Endothelial cell of umbilical vein (primary cell): ENCODE measurements at regions of chr18 and their contacts with region 1.

Region 1: DNA sequence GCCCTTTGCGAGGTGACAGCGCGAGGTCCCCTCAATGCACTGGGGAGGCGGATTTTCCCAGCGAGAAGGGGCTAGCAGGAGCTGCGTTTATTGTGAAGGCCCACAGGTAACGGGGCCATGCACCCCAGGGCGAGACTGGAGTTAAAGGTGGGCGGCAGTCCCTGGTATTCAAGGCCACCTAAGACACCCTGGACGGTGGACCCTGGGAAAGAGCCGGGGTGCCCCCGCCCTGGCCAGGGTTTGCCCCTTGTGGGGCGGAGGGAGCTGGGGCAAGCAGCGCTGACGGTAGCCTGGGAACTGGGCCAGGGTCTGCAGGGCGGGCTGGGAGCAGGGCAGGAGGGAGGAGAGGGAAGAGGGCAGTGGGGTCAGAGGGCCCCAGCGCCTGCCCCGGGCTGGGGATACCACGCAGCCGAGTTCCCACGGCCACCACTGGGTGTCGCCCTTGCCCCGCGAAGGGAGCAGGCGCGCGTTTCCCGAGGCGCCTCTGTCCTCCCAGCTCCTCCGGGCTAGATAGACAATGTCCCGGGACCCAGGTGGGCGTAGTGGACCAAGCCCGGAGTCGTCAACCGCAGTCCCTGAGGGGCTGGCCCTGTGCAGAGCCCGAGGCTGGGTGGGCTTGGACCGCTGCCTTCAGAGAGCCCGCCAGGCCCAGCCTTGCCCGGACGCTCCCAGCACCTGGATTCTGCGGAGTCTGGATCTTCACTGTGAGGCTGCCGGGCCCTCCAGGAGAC is 80.2 kb downstream of the SMAD4 start:
- DNase-seq: peak; percentile 20
- H3K4me3 ChIP-seq: no peak overlapping the region
- H3K27ac ChIP-seq: no peak overlapping the region
- H3K4me1 ChIP-seq: peaks cover 9% of the 10 kb centered on the region
- H3K27me3 ChIP-seq: no peaks in the 10 kb centered on the region
- CTCF ChIP-seq: peak; percentile 87 to 98
- POLR2A ChIP-seq: no peak

Region 2: GRCh38 chr18:51039138-51040112 is 70.8 kb before region 1 on chr18:
- CTCF ChIA-PET with region 1: no interaction called
- POLR2A ChIA-PET with region 1: no interaction called
- dilution Hi-C with region 1: no loop called
- intact Hi-C with region 1: no loop called
- DNase-seq: no peak
- H3K4me3 ChIP-seq: no peak overlapping the region
- H3K27ac ChIP-seq: no peak overlapping the region
- H3K4me1 ChIP-seq: no peaks in the 10 kb centered on the region
- H3K27me3 ChIP-seq: no peaks in the 10 kb centered on the region
- CTCF ChIP-seq: no peak
- POLR2A ChIP-seq: no peak

Region 3: GRCh38 chr18:51211552-51211951 is 101.3 kb after region 1 on chr18:
- CTCF ChIA-PET with region 1: no interaction called
- POLR2A ChIA-PET with region 1: no interaction called
- dilution Hi-C with region 1: no loop called
- intact Hi-C with region 1: no loop called
- DNase-seq: peak; percentile 83
- H3K4me3 ChIP-seq: no peak overlapping the region
- H3K27ac ChIP-seq: peak overlapping the region; percentile 39
- H3K4me1 ChIP-seq: peaks cover 10% of the 10 kb centered on the region
- H3K27me3 ChIP-seq: no peaks in the 10 kb centered on the region
- CTCF ChIP-seq: no peak
- POLR2A ChIP-seq: no peak

Region 4: GRCh38 chr18:51383711-51384110 is 273.5 kb after region 1 on chr18:
- CTCF ChIA-PET with region 1: interaction called, 14 read pairs
- POLR2A ChIA-PET with region 1: no interaction called
- dilution Hi-C with region 1: no loop called
- intact Hi-C with region 1: loop called (anchors 1 kb)
- DNase-seq: no peak
- H3K4me3 ChIP-seq: no peak overlapping the region
- H3K27ac ChIP-seq: no peak overlapping the region
- H3K4me1 ChIP-seq: no peaks in the 10 kb centered on the region
- H3K27me3 ChIP-seq: no peaks in the 10 kb centered on the region
- CTCF ChIP-seq: no peak
- POLR2A ChIP-seq: no peak